Dendritic cell treated with granulocyte-macrophage colony-stimulating factor and Interleukin-4, amounts not matched to agents 40 ng/mL and 50 ng/mL, for 4 days (primary cell): ENCODE measurements at regions of chr12 and their contacts with region 1.

Region 1: GRCh38 chr12:111330800-111331752 is 37.8 kb downstream of the PHETA1 start:
- H3K4me3 Mint-ChIP-seq: no peak overlapping the region
- H3K27ac Mint-ChIP-seq: peak overlapping the region; percentile 67
- H3K4me1 Mint-ChIP-seq: peaks cover 7% of the 10 kb centered on the region
- H3K27me3 Mint-ChIP-seq: peaks cover 9% of the 10 kb centered on the region

Region 2: DNA sequence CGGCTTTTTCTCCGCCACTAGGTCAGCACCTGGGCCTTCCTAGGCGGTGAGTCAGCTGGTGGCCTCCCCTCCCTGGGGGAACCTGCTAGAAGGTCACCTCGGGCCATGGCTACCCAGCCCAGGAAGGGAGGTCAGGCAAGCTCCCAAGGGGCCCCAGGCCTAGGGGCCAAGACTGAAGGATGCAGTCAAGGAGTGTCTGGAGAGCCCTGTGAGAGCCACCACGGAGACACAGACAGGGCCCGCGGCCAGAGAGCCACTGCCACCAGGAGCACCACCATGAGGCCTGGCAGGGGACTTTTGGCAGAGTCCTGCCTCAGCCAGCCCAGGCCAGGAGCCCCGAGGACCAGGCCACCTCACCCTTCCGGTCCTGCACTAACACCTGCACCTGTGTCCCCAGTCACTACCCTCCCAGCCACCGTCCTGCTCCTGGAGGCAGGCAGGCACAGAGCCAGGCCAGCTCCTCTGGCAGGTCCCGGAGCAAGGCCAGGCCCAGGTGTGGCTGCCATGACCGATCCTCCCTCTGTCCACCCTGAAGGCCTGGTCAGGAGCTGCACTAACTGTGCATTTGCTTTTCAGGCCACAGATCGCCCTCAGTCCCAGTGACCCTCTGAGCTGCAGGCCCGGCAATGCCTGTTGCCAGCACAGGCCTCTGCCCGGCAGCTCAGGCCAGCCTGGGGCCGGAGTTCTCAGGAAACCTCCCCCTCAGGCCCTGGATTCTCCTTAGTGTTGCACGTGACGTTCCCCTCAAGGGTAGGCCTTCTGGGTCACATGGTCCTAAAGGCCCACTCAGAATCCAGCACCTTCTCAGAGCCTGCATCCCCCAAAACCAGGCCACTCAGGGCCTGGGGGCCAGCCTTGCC is 30.9 kb after region 1 on chr12:
- intact Hi-C with region 1: loop called (anchors 2 kb)
- H3K4me3 Mint-ChIP-seq: no peak overlapping the region
- H3K27ac Mint-ChIP-seq: peak overlapping the region; percentile 77
- H3K4me1 Mint-ChIP-seq: peaks cover 59% of the 10 kb centered on the region
- H3K27me3 Mint-ChIP-seq: peaks cover 8% of the 10 kb centered on the region

Region 3: GRCh38 chr12:111396726-111397445 is 65.8 kb after region 1 on chr12:
- intact Hi-C with region 1: loop called (anchors 5 kb)
- H3K4me3 Mint-ChIP-seq: peak overlapping the region; percentile 77
- H3K27ac Mint-ChIP-seq: peak overlapping the region; percentile 92
- H3K4me1 Mint-ChIP-seq: peaks cover 61% of the 10 kb centered on the region
- H3K27me3 Mint-ChIP-seq: no peaks in the 10 kb centered on the region

Region 4: GRCh38 chr12:111451649-111452129 is 120.6 kb after region 1 on chr12:
- intact Hi-C with region 1: loop called (anchors 1 kb)
- H3K4me3 Mint-ChIP-seq: no peak overlapping the region
- H3K27ac Mint-ChIP-seq: no peak overlapping the region
- H3K4me1 Mint-ChIP-seq: peaks cover 57% of the 10 kb centered on the region
- H3K27me3 Mint-ChIP-seq: no peaks in the 10 kb centered on the region

Region 5: GRCh38 chr12:111529424-111530368 is 198.6 kb after region 1 on chr12:
- intact Hi-C with region 1: loop called (anchors 2 kb)
- H3K4me3 Mint-ChIP-seq: no peak overlapping the region
- H3K27ac Mint-ChIP-seq: no peak overlapping the region
- H3K4me1 Mint-ChIP-seq: peaks cover 6% of the 10 kb centered on the region
- H3K27me3 Mint-ChIP-seq: no peaks in the 10 kb centered on the region